Mammary epithelial cell (primary cell): ENCODE measurements at regions of chr2 and their contacts with region 1.

Region 1: DNA sequence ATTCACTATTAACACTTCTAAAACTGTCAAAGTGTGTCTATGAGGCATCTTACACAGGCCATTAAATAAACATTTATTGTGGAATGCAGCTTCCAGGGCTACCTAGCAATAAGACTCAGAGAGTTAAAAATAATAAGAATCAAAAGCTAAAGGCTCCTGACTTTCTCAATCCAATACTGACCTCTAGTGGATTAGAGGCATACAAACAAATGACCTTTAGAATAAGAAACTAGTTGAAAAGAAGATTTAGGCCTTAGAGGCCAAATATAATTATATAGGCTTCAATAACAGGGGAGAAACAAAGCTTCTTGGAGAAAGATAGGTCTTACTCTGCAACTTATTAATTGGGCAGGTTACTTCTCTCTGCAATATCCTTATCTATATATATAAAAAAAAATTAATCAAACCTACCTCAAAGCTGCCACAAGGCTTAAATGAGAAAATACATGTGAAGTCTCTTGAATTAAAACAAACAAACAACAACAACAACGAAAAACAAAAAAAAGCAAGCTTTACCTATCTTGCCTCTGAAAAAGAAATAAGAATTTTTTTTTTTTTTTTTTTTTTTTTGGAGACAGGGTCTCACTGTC is 246.1 kb downstream of the EXOC6B start:
- DNase-seq: peak; percentile 28
- H3K4me3 ChIP-seq: no peak overlapping the region
- H3K27ac ChIP-seq: no peak overlapping the region
- H3K4me1 ChIP-seq: no peaks in the 10 kb centered on the region
- H3K27me3 ChIP-seq: no peaks in the 10 kb centered on the region
- CTCF ChIP-seq: peak; percentile 52 to 60

Region 2: GRCh38 chr2:71530641-71531332 is 1048.9 kb before region 1 on chr2:
- CTCF ChIA-PET with region 1: no interaction called
- dilution Hi-C with region 1: no loop called
- in situ Hi-C with region 1: loop called in 1 of 2 experiments (anchors 25 kb)
- intact Hi-C with region 1: loop called (anchors 10 kb)
- DNase-seq: peak; percentile 24
- H3K4me3 ChIP-seq: no peak overlapping the region
- H3K27ac ChIP-seq: no peak overlapping the region
- H3K4me1 ChIP-seq: peaks cover 14% of the 10 kb centered on the region
- H3K27me3 ChIP-seq: no peaks in the 10 kb centered on the region
- CTCF ChIP-seq: peak; percentile 74 to 76

Region 3: DNA sequence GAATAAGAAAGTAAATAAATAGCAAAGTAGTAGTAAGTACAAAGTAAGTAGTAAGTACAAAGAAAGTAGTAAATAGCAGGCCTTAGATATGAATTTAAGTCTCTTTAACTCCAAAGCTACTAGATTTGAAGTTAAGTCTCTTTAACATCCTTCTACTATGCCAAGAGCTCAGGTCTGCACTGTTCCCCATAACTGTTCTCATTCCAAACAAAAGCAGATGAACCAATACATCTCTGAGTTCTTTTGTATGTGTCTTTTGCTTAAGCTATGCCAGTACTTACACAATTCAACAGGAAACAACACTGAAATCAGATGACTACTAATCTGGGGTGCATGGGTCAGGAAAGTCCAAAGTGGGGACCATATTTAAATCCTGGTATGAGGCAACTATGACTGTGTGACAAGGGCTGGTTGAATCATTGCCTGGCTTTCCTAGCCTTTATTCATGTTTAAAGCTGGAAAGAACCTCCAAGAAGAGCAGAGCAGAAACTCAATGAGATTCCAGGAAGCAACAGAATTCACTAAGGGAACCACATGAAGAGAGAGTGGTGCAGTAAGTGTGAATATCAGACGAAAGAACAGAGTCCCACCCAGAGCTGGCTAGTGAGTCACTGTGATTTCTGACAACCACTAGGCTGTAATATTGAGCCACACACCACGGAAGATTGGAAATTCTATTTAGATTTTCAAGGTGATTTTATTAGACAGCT is 381.0 kb before region 1 on chr2:
- CTCF ChIA-PET with region 1: no interaction called
- dilution Hi-C with region 1: loop called (anchors 25 kb)
- in situ Hi-C with region 1: no loop called
- intact Hi-C with region 1: loop called (anchors 1 kb)
- DNase-seq: peak; percentile 79
- H3K4me3 ChIP-seq: no peak overlapping the region
- H3K27ac ChIP-seq: no peak overlapping the region
- H3K4me1 ChIP-seq: peaks cover 11% of the 10 kb centered on the region
- H3K27me3 ChIP-seq: no peaks in the 10 kb centered on the region
- CTCF ChIP-seq: peak; percentile 18 to 45

Region 4: DNA sequence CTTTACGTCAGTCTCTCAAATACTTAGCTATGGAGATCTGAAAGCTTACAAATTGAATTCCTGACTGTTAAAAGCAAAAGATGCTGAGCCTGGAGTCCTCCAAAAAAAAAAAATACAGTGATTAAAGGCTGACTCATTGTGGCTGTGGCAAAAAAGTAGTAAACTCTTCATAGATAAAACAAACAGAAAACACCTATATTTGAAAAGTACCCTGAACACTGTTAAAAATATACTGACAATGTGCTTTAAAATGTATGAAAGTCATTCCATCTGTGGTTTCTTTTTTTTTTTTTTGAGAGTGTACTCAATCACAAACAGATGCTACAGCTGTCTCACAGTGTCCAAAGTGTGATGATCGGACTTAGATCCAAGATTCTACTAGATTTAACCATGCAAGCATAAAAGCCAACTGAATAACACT is 164.4 kb before region 1 on chr2:
- CTCF ChIA-PET with region 1: no interaction called
- dilution Hi-C with region 1: no loop called
- in situ Hi-C with region 1: no loop called
- intact Hi-C with region 1: no loop called
- DNase-seq: peak; percentile 18
- H3K4me3 ChIP-seq: no peak overlapping the region
- H3K27ac ChIP-seq: no peak overlapping the region
- H3K4me1 ChIP-seq: no peaks in the 10 kb centered on the region
- H3K27me3 ChIP-seq: no peaks in the 10 kb centered on the region
- CTCF ChIP-seq: no peak

Region 5: DNA sequence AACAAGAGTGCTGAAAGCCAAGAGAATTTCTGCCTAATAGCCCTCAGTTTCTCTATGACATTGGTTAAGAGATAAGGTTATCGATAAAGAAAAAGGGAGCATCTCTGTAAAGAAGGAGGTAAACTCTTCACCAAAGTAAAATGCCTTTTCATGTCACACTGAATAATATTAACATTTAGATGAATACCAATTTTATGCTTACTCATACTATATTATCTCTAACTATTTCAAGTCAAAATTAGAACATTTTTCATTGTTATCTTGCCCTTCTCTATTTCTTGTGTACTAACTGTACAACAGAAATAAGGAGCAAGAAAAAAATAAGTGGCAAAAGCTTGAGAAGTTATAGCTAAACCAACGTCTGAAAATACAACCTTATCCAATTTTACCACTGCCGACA is 118.6 kb after region 1 on chr2:
- CTCF ChIA-PET with region 1: no interaction called
- dilution Hi-C with region 1: no loop called
- in situ Hi-C with region 1: no loop called
- intact Hi-C with region 1: no loop called
- DNase-seq: no peak
- H3K4me3 ChIP-seq: no peak overlapping the region
- H3K27ac ChIP-seq: no peak overlapping the region
- H3K4me1 ChIP-seq: no peaks in the 10 kb centered on the region
- H3K27me3 ChIP-seq: no peaks in the 10 kb centered on the region
- CTCF ChIP-seq: no peak

Region 6: DNA sequence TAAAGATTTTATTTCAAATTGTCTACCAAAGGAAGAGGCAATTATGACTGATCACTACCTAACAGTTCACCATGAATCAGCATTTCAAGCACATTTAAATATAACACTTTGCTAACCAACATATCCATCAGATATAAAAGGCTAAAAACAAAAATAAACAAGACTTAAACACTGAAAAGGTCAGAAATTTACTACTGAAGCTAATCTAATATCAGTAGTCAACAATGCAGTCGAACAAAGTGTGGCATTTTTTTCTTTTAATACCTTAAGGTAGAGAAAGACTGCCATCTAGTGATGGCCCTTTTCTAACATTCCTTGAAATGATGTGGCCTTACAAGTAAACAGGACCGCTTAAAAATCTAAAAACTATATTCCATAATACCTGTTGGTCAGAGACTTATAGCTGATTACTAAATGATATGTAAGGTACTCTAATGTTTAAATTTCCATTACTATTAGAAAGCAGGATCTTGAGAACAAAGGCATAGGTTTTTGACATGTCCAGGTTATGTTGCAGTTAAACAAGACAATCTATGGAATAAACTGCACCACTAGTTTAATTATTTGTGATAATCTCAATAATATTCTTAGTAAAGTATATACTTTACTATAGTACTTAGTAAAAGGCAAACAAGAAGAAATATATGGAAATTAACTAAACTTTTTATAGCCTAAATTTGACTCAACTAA is 166.1 kb after region 1 on chr2:
- CTCF ChIA-PET with region 1: no interaction called
- dilution Hi-C with region 1: no loop called
- in situ Hi-C with region 1: no loop called
- intact Hi-C with region 1: loop called (anchors 2 kb)
- DNase-seq: peak; percentile 46
- H3K4me3 ChIP-seq: no peak overlapping the region
- H3K27ac ChIP-seq: no peak overlapping the region
- H3K4me1 ChIP-seq: peaks cover 6% of the 10 kb centered on the region
- H3K27me3 ChIP-seq: no peaks in the 10 kb centered on the region
- CTCF ChIP-seq: peak; percentile 68 to 76